ENCODE measurements at regions of chr9 and their contacts with region 1.

Region 1: GRCh38 chr9:111916234-111916645 is 19.6 kb downstream of the UGCG start:
- DNase-seq: no peak
- H3K4me3 ChIP-seq: no peak overlapping the region
- H3K27ac ChIP-seq: peak overlapping the region in 1 of 4 donors; percentile 7
- H3K4me1 ChIP-seq: peaks cover 3 to 44% (median 8%) of the 10 kb centered on the region in 4 donors
- H3K27me3 ChIP-seq: no peaks in the 10 kb centered on the region
- CTCF ChIP-seq: no peak
- EP300 ChIP-seq: no peak
- POLR2A ChIP-seq: no peak

Region 2: GRCh38 chr9:110414471-110414870 is 1501.8 kb before region 1 on chr9:
- in situ Hi-C with region 1: no loop called
- intact Hi-C with region 1: no loop called
- DNase-seq: no peak
- H3K4me3 ChIP-seq: no peak overlapping the region
- H3K27ac ChIP-seq: no peak overlapping the region
- H3K4me1 ChIP-seq: no peaks in the 10 kb centered on the region
- H3K27me3 ChIP-seq: no peaks in the 10 kb centered on the region
- CTCF ChIP-seq: no peak
- EP300 ChIP-seq: no peak
- POLR2A ChIP-seq: no peak

Region 3: GRCh38 chr9:112059145-112059965 is 143.1 kb after region 1 on chr9:
- in situ Hi-C with region 1: no loop called
- intact Hi-C with region 1: loop called (anchors 10 kb)
- DNase-seq: peak; percentile 55
- H3K4me3 ChIP-seq: no peak overlapping the region
- H3K27ac ChIP-seq: peak overlapping the region; percentile 80 to 85 (median 83)
- H3K4me1 ChIP-seq: peaks cover 5 to 53% (median 35%) of the 10 kb centered on the region in 4 donors
- H3K27me3 ChIP-seq: no peaks in the 10 kb centered on the region
- CTCF ChIP-seq: no peak
- EP300 ChIP-seq: peak; percentile 59
- POLR2A ChIP-seq: no peak

Measured in transverse colon (tissue), 4 donors.